Activated naive CD4-positive, alpha-beta T cell treated with anti-CD3 and anti-CD28 coated beads, Interleukin-2, amount 10 ng/mL, durations not matched to agents 7 days and 5 days (primary cell): ENCODE measurements at regions of chr1 and their contacts with region 1.

Region 1: DNA sequence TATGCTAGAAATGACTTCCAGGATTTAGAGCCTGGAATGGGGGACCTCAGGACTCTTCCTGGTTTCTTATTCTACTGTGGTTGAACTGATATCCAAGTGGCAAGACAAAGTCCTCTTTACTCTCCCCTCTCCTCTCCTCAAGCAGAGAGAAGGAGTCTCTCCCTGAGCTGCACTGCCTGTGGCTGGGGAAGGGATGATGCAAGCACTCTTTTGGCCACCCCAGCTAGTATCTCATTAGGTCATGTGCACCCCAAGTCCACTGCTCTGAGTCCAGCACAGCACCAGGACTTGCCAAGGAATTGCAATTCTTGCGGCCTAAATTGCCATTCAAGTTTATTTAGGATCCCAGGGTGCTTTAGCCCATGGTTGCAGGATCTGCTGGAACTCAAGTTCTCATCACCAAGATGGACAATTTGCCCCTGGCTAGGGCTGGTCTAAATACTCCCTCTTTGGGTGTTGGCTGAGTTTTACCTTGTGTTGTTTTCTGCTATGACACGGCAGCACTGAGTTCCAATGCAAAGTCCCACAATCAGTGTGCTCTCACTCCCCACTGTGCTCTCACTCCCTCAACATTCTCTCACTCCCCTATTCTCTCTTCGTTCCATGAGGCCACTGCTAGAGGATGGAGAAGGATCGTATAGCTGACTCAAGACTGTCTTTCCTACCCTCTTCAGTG is 172.2 kb downstream of the TM2D1 start:
- DNase-seq: no peak
- H3K4me3 Mint-ChIP-seq: no peak overlapping the region
- H3K27ac Mint-ChIP-seq: no peak overlapping the region
- H3K4me1 Mint-ChIP-seq: no peaks in the 10 kb centered on the region
- H3K27me3 Mint-ChIP-seq: peaks cover 21% of the 10 kb centered on the region

Region 2: DNA sequence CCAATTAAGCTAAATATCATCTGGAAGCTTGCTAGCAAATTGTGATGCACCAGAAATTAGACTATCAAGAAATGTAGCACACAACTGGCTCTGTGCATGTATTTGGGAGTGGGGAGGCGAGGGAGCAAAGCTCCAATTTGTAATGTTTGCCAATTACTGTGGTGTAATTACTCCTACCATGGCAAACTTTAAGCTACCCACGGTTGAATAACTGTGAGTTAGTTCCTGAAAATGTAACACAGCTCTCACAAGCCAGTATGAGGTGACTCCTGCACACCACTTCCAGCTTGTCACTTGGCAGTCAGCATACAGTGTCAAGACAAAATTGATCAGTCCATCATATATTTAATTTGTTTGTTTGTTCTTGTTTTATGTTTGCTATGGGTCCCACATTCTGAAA is 30.9 kb after region 1 on chr1:
- CTCF ChIA-PET with region 1: interaction called, 10 read pairs
- DNase-seq: no peak
- H3K4me3 Mint-ChIP-seq: no peak overlapping the region
- H3K27ac Mint-ChIP-seq: no peak overlapping the region
- H3K4me1 Mint-ChIP-seq: no peaks in the 10 kb centered on the region
- H3K27me3 Mint-ChIP-seq: peaks cover 6% of the 10 kb centered on the region